Naive thymus-derived CD8-positive, alpha-beta T cell (primary cell): ENCODE measurements at regions of chr17 and their contacts with region 1.

Region 1: GRCh38 chr17:41322094-41322902 is 6.8 kb upstream of the KRTAP17-1 start:
- DNase-seq: peak in 5 of 10 donors; percentile 32 to 72 (median 65)
- ATAC-seq: peak; percentile 60 to 75
- H3K4me3 Mint-ChIP-seq: no peak overlapping the region
- H3K27ac Mint-ChIP-seq: peak overlapping the region in 9 of 10 donors; percentile 12 to 92 (median 83)
- H3K4me1 Mint-ChIP-seq: peaks cover 31 to 60% (median 53%) of the 10 kb centered on the region in 4 donors
- H3K27me3 Mint-ChIP-seq: no peaks in the 10 kb centered on the region

Region 2: GRCh38 chr17:41254861-41255260 is 67.4 kb before region 1 on chr17:
- POLR2A ChIA-PET with region 1: no interaction called
- DNase-seq: no peak
- ATAC-seq: no peak
- H3K4me3 Mint-ChIP-seq: no peak overlapping the region
- H3K27ac Mint-ChIP-seq: no peak overlapping the region
- H3K4me1 Mint-ChIP-seq: peaks cover 5 to 20% (median 7%) of the 10 kb centered on the region in 4 donors
- H3K27me3 Mint-ChIP-seq: peaks cover 0 to 25% (median 2%) of the 10 kb centered on the region in 5 donors

Region 3: DNA sequence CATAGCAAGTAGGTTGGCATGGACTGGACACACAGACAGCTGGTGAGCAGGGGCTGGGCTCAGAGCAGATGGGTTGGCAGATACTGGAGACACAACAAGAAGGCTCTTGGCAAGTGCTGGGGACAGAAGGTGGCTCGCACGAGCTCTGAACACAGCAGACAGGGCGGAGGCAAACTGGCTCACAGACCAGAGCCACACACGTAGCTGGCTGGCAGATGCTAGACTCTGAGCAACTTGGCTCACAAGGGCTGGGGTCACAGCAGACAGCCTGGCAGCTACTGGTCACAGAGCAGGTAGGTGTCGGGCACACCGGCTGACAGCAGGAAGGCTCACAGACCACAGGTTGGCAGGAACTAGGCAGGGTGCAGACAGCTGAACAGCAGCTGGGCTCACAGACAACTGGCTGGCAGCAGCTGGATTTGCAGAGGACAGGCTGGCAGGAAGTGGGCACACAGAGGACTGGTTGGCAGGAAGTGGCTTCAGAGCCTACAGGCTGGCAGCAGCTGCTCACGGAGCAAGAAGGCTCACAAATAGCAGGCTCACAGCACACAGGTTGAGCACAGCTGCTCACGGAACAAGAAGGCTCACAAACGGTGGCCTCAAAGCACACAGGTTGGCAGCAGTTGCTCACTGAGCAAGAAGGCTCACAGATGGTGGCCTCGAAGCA is 13.9 kb before region 1 on chr17:
- POLR2A ChIA-PET with region 1: interaction called, 27 read pairs
- DNase-seq: peak; percentile 56 to 95 (median 86)
- ATAC-seq: peak; percentile 85
- H3K4me3 Mint-ChIP-seq: peak overlapping the region; percentile 73 to 84 (median 80)
- H3K27ac Mint-ChIP-seq: peak overlapping the region; percentile 96 to 100 (median 99)
- H3K4me1 Mint-ChIP-seq: peaks cover 49 to 70% (median 68%) of the 10 kb centered on the region in 4 donors
- H3K27me3 Mint-ChIP-seq: no peaks in the 10 kb centered on the region